Sigmoid colon (tissue), 7 donors: ENCODE measurements at regions of chr3 and their contacts with region 1.

Region 1: DNA sequence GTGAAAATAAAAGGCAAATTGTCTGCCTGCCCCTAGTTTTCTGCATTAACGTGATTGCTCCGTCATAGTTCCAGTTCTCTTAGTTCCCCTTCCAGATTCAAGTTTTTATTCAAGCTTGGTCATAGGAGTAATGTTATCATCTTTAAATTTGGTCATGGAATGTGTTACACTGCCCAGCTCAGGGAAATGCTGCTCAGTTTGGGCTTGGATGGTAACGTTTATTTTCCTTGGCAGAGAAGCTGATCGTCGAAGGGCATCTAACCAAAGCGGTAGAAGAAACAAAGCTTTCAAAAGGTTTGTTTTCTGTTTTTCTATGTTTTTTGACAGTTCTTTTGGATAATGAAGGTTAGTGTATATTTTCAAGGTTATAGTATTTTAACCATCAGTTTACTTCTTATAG is 118.4 kb upstream of the FLNB start:
- DNase-seq: peak; percentile 77
- H3K4me3 ChIP-seq: peak overlapping the region; percentile 41 to 54 (median 46)
- H3K27ac ChIP-seq: peak overlapping the region; percentile 86 to 93 (median 88)
- H3K4me1 ChIP-seq: peaks cover 0 to 20% (median 9%) of the 10 kb centered on the region in 4 donors
- H3K27me3 ChIP-seq: no peaks in the 10 kb centered on the region
- CTCF ChIP-seq: no peak
- EP300 ChIP-seq: peak in 3 of 4 donors; percentile 43 to 94 (median 60)
- POLR2A ChIP-seq: peak; percentile 49 to 83

Region 2: GRCh38 chr3:57951066-57951882 is 61.5 kb after region 1 on chr3:
- intact Hi-C with region 1: loop called (anchors 2 kb)
- DNase-seq: peak; percentile 93
- H3K4me3 ChIP-seq: no peak overlapping the region
- H3K27ac ChIP-seq: peak overlapping the region; percentile 90 to 98 (median 92)
- H3K4me1 ChIP-seq: peaks cover 0 to 69% (median 62%) of the 10 kb centered on the region in 4 donors
- H3K27me3 ChIP-seq: no peaks in the 10 kb centered on the region
- CTCF ChIP-seq: no peak
- EP300 ChIP-seq: peak; percentile 35 to 93 (median 84)
- POLR2A ChIP-seq: no peak

Region 3: DNA sequence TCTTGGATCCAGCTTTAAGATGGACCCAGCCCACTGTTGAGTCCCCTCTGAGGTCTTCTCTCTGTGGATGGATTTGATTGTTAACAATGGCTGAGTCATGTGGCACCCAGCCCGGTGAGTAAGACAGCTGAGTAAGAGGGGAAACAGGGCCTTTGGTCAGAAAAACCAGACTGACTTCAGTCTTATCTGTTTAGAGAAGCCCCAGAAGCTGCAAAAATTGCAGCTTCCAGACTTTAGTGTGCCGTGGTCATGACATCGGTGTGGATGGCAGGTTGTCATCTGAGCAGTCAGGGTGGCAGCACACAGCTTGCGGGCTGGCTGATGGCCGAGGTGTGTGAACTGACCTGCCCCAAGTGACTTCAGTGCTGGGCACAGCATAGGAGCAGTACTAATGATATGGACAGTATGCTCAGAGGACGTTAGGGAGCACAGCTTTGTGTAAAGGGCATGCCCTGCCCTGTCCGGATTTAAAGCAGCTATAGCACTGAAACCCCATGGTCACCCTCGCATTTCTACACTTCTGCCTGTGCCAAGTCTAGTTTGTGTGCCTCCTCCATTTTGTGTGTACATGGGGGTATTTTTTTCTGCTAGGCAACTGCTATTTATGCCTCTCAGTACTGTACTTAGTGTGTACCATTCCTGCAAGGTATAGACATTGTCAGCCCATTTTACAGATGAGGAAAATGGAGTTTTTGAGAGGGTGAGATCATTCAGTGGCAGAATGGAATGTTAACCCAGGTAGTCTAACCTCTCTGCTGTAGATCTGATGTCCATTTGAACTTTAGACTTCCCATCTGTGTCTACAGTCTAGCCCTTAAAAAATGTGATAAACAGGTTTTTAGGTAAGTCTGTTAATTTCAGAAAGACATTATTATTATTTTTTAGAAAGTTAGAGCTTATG is 162.8 kb after region 1 on chr3:
- intact Hi-C with region 1: loop called (anchors 10 kb)
- DNase-seq: peak; percentile 94
- H3K4me3 ChIP-seq: no peak overlapping the region
- H3K27ac ChIP-seq: peak overlapping the region; percentile 76 to 93 (median 84)
- H3K4me1 ChIP-seq: peaks cover 2 to 89% (median 75%) of the 10 kb centered on the region in 4 donors
- H3K27me3 ChIP-seq: no peaks in the 10 kb centered on the region
- CTCF ChIP-seq: no peak
- EP300 ChIP-seq: no peak
- POLR2A ChIP-seq: no peak

Region 4: DNA sequence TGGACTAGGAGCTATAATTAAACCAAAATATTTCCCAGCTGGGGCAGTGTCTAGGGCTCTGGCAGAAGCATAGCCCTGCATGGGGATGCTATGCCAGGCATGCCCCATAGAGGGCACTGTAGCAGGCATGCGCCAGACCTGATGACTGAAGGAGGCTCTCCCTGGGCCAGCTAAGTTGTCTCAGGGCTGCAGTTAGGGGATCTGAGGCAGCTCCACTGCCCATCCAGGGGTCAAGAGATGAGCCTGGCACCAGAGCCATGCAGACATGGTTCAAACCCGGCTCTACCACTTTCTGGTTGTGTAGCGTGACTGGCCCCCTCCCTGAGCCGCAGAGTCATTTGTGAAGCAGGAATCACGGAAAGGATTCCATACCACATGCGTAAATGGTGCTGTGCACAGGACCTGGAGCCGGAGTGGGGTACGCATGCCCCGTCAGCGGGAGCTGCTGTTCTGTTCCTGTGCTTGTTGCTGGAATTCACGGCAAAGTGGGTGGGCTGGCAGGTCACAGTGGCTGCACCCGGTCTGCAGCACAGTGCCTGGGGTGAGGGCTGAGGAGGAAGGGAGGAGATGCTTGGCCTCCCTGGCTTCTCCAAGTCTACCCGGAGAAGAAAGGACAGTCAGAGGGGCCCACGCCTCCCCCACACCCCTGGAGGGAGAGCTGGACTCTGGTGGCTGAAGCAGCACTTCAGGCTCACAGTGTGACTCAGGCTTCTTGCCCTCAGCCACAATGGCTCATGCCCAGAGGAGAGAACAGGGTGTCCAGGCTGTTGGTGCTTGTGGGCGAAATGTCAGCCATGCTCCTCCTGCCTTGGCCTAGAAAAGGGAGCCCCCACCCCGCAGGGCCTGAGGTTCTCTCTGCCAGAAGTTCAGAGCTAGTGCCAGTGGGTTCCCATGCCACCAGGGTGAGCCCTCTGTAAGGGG is 277.9 kb after region 1 on chr3:
- intact Hi-C with region 1: loop called (anchors 10 kb)
- DNase-seq: peak; percentile 89
- H3K4me3 ChIP-seq: no peak overlapping the region
- H3K27ac ChIP-seq: peak overlapping the region; percentile 47 to 92 (median 82)
- H3K4me1 ChIP-seq: peaks cover 0 to 59% (median 52%) of the 10 kb centered on the region in 4 donors
- H3K27me3 ChIP-seq: no peaks in the 10 kb centered on the region
- CTCF ChIP-seq: peak; percentile 59 to 91 (median 78)
- EP300 ChIP-seq: no peak
- POLR2A ChIP-seq: no peak